ENCODE measurements at regions of chr1 and their contacts with region 1.

Region 1: DNA sequence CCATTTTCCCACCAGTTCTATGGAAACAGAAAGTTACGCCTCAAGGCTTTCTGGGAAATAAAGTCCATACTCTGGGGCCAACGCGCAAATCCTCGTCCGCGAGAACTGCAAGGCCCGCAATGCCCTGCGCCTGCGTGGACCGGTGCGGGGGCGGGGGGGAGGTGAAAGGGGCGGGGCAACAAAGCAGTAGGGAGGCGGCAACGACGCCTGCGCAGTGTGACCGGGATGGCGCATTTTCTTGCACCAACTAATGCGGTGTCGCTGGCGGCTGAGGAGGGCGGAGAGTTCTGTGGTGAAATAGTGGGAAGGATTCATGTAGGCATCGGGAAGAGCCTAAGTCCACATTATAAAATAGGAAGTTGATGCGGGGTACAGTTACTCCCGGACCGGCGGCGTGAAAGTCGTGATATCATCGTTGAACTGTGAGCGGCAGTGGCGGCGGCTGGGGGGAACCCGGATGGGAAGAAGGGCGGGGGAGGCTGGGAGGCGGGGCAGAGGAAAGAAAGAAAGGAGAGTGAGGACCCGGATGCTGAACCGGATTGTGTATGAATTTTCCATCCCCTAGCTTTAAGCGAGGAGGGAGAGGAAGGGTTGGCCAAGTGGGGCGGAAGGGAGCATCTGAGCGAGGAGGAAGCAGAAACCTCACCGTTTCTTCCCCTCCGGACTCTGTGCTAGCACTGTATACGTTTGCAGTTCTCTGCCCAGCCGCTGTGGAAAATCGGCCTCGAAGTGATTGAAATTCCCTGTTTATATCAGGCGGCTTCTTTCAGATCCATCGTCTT is at the start of gene GGPS1:
- DNase-seq: peak; percentile 94 to 98 (median 96)
- H3K4me3 ChIP-seq: peak within 1 kb of the TSS; percentile 73 to 100 (median 95)
- H3K27ac ChIP-seq: peak within 1 kb of the TSS; percentile 89 to 100 (median 98)
- H3K27me3 ChIP-seq: no peaks in the 10 kb centered on the region
- CTCF ChIP-seq: peak in 38 of 56 donors; percentile 5 to 52 (median 28)
- total RNA-seq, gene GGPS1: 28.5 to 60.2 (median 43.4) TPM

Region 2: GRCh38 chr1:234373064-234373958 is 955.2 kb before region 1 on chr1 and contains the start of gene COA6:
- intact Hi-C with region 1: loop called in 1 of 2 experiments (anchors 5 kb)
- DNase-seq: peak; percentile 82 to 92 (median 90)
- H3K4me3 ChIP-seq: peak within 1 kb of the TSS; percentile 60 to 98 (median 86)
- H3K27ac ChIP-seq: peak within 1 kb of the TSS; percentile 92 to 100 (median 98)
- H3K27me3 ChIP-seq: no peaks in the 10 kb centered on the region
- CTCF ChIP-seq: peak in 30 of 56 donors; percentile 4 to 63 (median 28)
- total RNA-seq, gene COA6: 17.7 to 56.0 (median 37.2) TPM

Region 3: GRCh38 chr1:235160957-235161684 is 167.4 kb before region 1 on chr1 and contains the start of gene RBM34:
- intact Hi-C with region 1: loop called in 1 of 2 experiments (anchors 10 kb)
- DNase-seq: peak; percentile 84 to 95 (median 90)
- H3K4me3 ChIP-seq: peak within 1 kb of the TSS; percentile 62 to 98 (median 83)
- H3K27ac ChIP-seq: peak within 1 kb of the TSS; percentile 2 to 97 (median 87)
- H3K27me3 ChIP-seq: no peaks in the 10 kb centered on the region
- CTCF ChIP-seq: peak in 49 of 56 donors; percentile 6 to 65 (median 42)
- total RNA-seq, gene RBM34: 32.7 to 73.0 (median 56.5) TPM

Region 4: DNA sequence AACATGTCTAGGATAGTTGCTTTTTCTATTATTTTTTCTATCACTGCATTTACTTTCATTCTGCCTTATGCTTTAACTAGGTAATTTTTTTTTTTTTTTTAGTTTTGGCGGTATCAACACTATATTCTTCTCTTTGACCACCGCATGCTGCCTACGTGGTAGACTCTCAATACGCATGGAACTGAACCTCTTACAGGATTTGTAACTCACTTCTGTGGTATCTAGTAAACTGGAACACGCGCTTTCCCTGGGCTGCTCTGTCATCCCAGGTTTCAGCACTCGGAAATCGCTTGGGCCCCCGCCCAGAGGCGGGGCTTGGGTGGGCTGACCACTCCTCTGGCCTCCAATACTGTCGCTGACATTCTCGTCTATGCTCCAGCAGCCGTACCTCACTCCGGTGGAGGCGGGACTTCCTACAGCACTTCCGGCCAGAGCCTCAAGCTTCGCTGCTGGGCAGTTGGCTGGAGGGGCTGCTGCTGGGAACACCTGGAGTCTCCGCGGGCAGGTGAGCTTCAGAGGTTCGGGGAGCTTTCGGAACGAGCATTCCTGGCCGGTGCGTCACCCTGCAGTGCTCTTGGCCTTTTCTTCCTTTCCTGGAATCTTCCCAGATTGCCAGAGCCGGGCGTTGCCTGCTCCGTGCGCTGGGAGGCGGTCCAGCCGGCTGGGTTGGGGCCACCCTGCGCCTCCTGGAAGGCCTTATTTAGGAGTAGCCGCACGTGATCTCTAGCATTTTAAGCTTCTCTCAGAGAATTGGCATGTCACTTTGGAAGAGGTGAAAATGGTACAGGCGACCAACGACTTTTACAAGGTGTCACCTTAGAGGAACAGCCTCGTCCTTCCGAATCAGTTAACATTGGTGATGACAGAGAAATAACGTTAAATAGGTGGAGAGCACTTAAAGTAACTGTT is 38.7 kb after region 1 on chr1 and contains the start of gene TBCE:
- intact Hi-C with region 1: loop called (anchors 1 to 5 kb)
- DNase-seq: peak; percentile 92 to 98 (median 96)
- H3K4me3 ChIP-seq: peak within 1 kb of the TSS; percentile 56 to 100 (median 86)
- H3K27ac ChIP-seq: peak within 1 kb of the TSS in 56 of 59 donors; percentile 9 to 85 (median 67)
- H3K27me3 ChIP-seq: no peaks in the 10 kb centered on the region
- CTCF ChIP-seq: peak in 26 of 56 donors; percentile 3 to 58 (median 26)
- total RNA-seq, gene TBCE: 15.5 to 48.9 (median 30.1) TPM

Region 5: GRCh38 chr1:235504496-235505222 is 176.1 kb after region 1 on chr1:
- intact Hi-C with region 1: loop called (anchors 2 to 5 kb)
- DNase-seq: peak; percentile 98 to 99 (median 99)
- H3K4me3 ChIP-seq: peak overlapping the region; percentile 67 to 95 (median 85)
- H3K27ac ChIP-seq: peak overlapping the region; percentile 72 to 100 (median 97)
- H3K27me3 ChIP-seq: no peaks in the 10 kb centered on the region
- CTCF ChIP-seq: peak; percentile 61 to 99 (median 94)

Region 6: DNA sequence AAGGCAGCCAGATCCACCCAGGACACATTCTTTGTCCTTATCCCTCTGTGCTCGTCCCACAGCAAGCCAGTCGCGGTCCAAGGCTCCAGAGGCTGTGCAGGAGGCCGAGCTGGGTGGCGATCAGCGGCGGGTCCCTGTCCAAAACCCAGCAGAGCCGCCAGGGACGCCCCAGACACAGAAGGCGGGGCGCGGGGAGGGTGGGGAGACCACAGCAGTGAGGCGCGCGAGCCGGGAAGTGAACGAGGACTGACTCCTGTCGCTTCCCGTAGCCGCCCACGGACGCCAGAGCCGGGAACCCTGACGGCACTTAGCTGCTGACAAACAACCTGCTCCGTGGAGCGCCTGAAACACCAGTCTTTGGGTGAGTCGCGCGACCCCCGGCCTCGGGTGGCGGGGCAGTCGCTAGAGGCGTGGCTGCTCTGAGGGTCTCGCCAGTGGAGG is 1195.2 kb after region 1 on chr1 and contains the start of gene LGALS8:
- intact Hi-C with region 1: loop called in 1 of 2 experiments (anchors 10 kb)
- DNase-seq: peak; percentile 75 to 94 (median 87)
- H3K4me3 ChIP-seq: peak within 1 kb of the TSS; percentile 66 to 100 (median 95)
- H3K27ac ChIP-seq: peak within 1 kb of the TSS in 58 of 59 donors; percentile 30 to 93 (median 80)
- H3K27me3 ChIP-seq: no peaks in the 10 kb centered on the region
- CTCF ChIP-seq: peak in 13 of 56 donors; percentile 9 to 30 (median 22)
- total RNA-seq, gene LGALS8: 33.6 to 99.3 (median 70.0) TPM